B cell (primary cell): ENCODE measurements at regions of chr6 and their contacts with region 1.

Region 1: GRCh38 chr6:26031595-26032339 is 55.5 kb upstream of the HFE start:
- DNase-seq: peak; percentile 90
- ATAC-seq: peak; percentile 63
- H3K4me3 ChIP-seq: peak overlapping the region; percentile 67 to 85 (median 69)
- H3K4me3 Mint-ChIP-seq: peak overlapping the region; percentile 96
- H3K27ac ChIP-seq: peak overlapping the region; percentile 76 to 78
- H3K27ac Mint-ChIP-seq: peak overlapping the region; percentile 87
- H3K4me1 ChIP-seq: peaks cover 26 to 36% of the 10 kb centered on the region in 2 donors
- H3K4me1 Mint-ChIP-seq: peaks cover 46% of the 10 kb centered on the region
- H3K27me3 ChIP-seq: no peaks in the 10 kb centered on the region
- H3K27me3 Mint-ChIP-seq: no peaks in the 10 kb centered on the region
- CTCF ChIP-seq: no peak

Region 2: DNA sequence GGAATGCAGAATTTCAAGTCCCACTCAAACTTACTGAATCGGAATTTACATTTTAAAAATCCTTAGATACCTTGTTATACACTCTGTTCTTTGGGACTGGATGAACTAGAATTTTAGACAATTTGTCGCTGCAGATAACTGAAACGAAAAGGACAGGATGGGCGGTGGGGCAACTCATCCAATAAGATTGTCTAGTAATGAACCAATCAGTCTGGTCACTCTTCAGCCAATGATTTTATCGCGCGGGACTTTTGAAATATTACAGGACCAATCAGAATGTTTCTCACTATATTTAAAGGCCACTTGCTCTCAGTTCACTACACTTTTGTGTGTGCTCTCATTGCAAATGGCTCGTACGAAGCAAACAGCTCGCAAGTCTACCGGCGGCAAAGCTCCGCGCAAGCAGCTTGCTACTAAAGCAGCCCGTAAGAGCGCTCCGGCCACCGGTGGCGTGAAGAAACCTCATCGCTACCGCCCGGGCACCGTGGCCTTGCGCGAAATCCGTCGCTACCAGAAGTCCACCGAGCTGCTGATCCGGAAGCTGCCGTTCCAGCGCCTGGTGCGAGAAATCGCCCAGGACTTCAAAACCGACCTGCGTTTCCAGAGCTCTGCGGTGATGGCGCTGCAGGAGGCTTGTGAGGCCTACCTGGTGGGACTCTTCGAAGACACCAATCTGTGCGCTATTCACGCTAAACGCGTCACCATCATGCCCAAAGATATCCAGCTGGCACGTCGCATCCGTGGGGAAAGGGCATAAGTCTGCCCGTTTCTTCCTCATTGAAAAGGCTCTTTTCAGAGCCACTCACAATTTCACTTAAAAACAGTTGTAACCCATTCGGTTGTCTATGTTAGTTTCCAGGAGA is 13.5 kb after region 1 on chr6:
- CTCF ChIA-PET with region 1: interaction called, 55 read pairs
- POLR2A ChIA-PET with region 1: interaction called, 111 read pairs
- intact Hi-C with region 1: loop called (anchors 1 kb)
- DNase-seq: peak; percentile 90
- ATAC-seq: peak; percentile 58
- H3K4me3 ChIP-seq: peak overlapping the region; percentile 56 to 98 (median 69)
- H3K4me3 Mint-ChIP-seq: peak overlapping the region; percentile 87
- H3K27ac ChIP-seq: peak overlapping the region; percentile 85 to 89
- H3K27ac Mint-ChIP-seq: peak overlapping the region; percentile 99
- H3K4me1 ChIP-seq: peaks cover 14 to 29% of the 10 kb centered on the region in 2 donors
- H3K4me1 Mint-ChIP-seq: peaks cover 17% of the 10 kb centered on the region
- H3K27me3 ChIP-seq: no peaks in the 10 kb centered on the region
- H3K27me3 Mint-ChIP-seq: no peaks in the 10 kb centered on the region
- CTCF ChIP-seq: no peak

Region 3: GRCh38 chr6:26054857-26055669 is 23.3 kb after region 1 on chr6:
- CTCF ChIA-PET with region 1: interaction called, 38 read pairs
- POLR2A ChIA-PET with region 1: interaction called, 33 read pairs
- intact Hi-C with region 1: loop called (anchors 1 kb)
- DNase-seq: peak; percentile 93
- ATAC-seq: peak; percentile 65
- H3K4me3 ChIP-seq: peak overlapping the region; percentile 69 to 100 (median 94)
- H3K4me3 Mint-ChIP-seq: peak overlapping the region; percentile 96
- H3K27ac ChIP-seq: peak overlapping the region; percentile 80 to 91
- H3K27ac Mint-ChIP-seq: peak overlapping the region; percentile 97
- H3K4me1 ChIP-seq: peaks cover 12 to 16% of the 10 kb centered on the region in 2 donors
- H3K4me1 Mint-ChIP-seq: peaks cover 15% of the 10 kb centered on the region
- H3K27me3 ChIP-seq: no peaks in the 10 kb centered on the region
- H3K27me3 Mint-ChIP-seq: no peaks in the 10 kb centered on the region
- CTCF ChIP-seq: no peak

Region 4: DNA sequence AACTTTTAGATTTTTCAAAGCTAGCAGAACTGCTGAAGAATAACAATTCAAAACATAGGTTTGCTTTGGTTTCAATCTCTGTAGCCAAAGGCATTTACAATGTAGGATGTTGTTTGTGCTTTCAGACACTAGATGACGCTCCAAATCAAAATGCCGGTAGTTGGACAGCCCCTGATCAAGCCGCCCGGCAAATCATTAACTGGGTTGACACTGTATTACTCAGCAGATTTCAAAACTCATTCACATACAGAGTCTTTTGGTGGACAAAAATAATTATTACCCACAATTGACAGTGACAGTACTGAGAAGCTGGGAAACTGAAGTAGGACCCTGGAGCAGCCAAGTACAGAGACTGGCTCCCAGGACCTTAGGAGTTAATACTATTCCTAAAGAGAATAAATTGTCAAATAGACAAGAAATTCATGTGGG is 34.2 kb after region 1 on chr6:
- CTCF ChIA-PET with region 1: interaction called, 38 read pairs
- POLR2A ChIA-PET with region 1: no interaction called
- intact Hi-C with region 1: no loop called
- DNase-seq: peak; percentile 83
- ATAC-seq: peak; percentile 88
- H3K4me3 ChIP-seq: no peak overlapping the region
- H3K4me3 Mint-ChIP-seq: no peak overlapping the region
- H3K27ac ChIP-seq: no peak overlapping the region
- H3K27ac Mint-ChIP-seq: no peak overlapping the region
- H3K4me1 ChIP-seq: peaks cover 0 to 4% of the 10 kb centered on the region in 2 donors
- H3K4me1 Mint-ChIP-seq: peaks cover 7% of the 10 kb centered on the region
- H3K27me3 ChIP-seq: peaks cover 0 to 2% (median 0%) of the 10 kb centered on the region in 4 experiments
- H3K27me3 Mint-ChIP-seq: no peaks in the 10 kb centered on the region
- CTCF ChIP-seq: peak; percentile 90

Region 5: GRCh38 chr6:26103770-26104456 is 72.1 kb after region 1 on chr6:
- CTCF ChIA-PET with region 1: interaction called, 8 read pairs
- POLR2A ChIA-PET with region 1: interaction called, 29 read pairs
- intact Hi-C with region 1: no loop called
- DNase-seq: peak; percentile 98
- ATAC-seq: peak; percentile 87
- H3K4me3 ChIP-seq: peak overlapping the region; percentile 52 to 81 (median 62)
- H3K4me3 Mint-ChIP-seq: peak overlapping the region; percentile 88
- H3K27ac ChIP-seq: peak overlapping the region; percentile 78 to 79
- H3K27ac Mint-ChIP-seq: peak overlapping the region; percentile 99
- H3K4me1 ChIP-seq: peaks cover 5 to 15% of the 10 kb centered on the region in 2 donors
- H3K4me1 Mint-ChIP-seq: peaks cover 15% of the 10 kb centered on the region
- H3K27me3 ChIP-seq: no peaks in the 10 kb centered on the region
- H3K27me3 Mint-ChIP-seq: no peaks in the 10 kb centered on the region
- CTCF ChIP-seq: peak; percentile 66

Region 6: DNA sequence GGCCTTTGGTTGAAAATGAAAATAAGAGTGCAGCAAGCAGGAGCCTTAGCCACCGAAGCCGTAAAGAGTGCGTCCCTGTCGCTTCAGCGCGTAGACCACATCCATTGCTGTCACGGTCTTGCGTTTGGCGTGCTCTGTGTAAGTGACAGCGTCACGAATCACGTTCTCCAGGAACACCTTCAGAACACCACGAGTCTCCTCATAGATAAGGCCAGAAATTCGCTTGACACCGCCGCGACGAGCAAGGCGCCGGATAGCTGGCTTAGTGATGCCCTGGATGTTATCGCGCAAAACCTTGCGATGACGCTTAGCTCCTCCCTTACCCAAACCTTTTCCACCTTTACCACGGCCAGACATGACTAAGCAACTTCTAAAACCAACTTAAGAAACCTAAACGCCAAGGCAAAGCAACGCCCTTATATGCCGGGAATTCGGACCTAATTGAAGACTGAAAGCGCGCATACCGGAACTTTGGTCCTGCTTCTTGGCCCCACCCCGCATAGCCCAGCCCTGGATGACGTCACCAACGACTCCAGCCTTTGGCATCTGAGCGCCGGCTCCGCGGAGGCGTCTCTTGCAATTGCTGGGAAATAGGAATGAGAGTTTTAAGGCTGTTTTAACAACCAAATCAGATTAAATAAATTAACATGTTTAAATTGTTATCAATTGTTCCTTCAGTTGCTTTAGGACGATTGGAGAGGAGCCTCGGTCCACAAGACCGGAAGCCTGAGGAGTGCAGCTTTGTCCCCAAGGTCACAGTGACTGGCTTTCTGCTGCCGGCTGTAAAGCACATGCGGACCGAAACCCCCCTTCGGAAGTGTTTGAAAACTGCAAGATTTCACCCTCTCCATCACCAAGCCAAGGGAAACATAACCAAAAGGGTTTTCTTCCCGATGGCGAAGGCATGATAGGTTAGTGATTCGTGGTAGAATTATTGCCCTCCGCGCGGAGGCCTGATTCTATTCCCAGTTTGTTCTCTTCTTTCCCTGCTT is 253.7 kb after region 1 on chr6:
- CTCF ChIA-PET with region 1: no interaction called
- POLR2A ChIA-PET with region 1: no interaction called
- intact Hi-C with region 1: no loop called
- DNase-seq: peak; percentile 99
- ATAC-seq: peak; percentile 76
- H3K4me3 ChIP-seq: peak overlapping the region; percentile 52 to 99 (median 71)
- H3K4me3 Mint-ChIP-seq: peak overlapping the region; percentile 90
- H3K27ac ChIP-seq: peak overlapping the region; percentile 93 to 97
- H3K27ac Mint-ChIP-seq: peak overlapping the region; percentile 95
- H3K4me1 ChIP-seq: peaks cover 17 to 18% of the 10 kb centered on the region in 2 donors
- H3K4me1 Mint-ChIP-seq: peaks cover 33% of the 10 kb centered on the region
- H3K27me3 ChIP-seq: no peaks in the 10 kb centered on the region
- H3K27me3 Mint-ChIP-seq: peaks cover 3% of the 10 kb centered on the region
- CTCF ChIP-seq: no peak

Region 7: GRCh38 chr6:27157459-27158315 is 1125.9 kb after region 1 on chr6:
- CTCF ChIA-PET with region 1: no interaction called
- POLR2A ChIA-PET with region 1: interaction called, 10 read pairs
- intact Hi-C with region 1: no loop called
- DNase-seq: peak; percentile 91
- ATAC-seq: peak; percentile 77
- H3K4me3 ChIP-seq: peak overlapping the region; percentile 59 to 91 (median 72)
- H3K4me3 Mint-ChIP-seq: peak overlapping the region; percentile 94
- H3K27ac ChIP-seq: peak overlapping the region; percentile 18 to 45
- H3K27ac Mint-ChIP-seq: peak overlapping the region; percentile 85
- H3K4me1 ChIP-seq: peaks cover 17 to 20% of the 10 kb centered on the region in 2 donors
- H3K4me1 Mint-ChIP-seq: peaks cover 25% of the 10 kb centered on the region
- H3K27me3 ChIP-seq: no peaks in the 10 kb centered on the region
- H3K27me3 Mint-ChIP-seq: no peaks in the 10 kb centered on the region
- CTCF ChIP-seq: peak; percentile 64